ENCODE measurements at regions of chr14 and their contacts with region 1.

Region 1: DNA sequence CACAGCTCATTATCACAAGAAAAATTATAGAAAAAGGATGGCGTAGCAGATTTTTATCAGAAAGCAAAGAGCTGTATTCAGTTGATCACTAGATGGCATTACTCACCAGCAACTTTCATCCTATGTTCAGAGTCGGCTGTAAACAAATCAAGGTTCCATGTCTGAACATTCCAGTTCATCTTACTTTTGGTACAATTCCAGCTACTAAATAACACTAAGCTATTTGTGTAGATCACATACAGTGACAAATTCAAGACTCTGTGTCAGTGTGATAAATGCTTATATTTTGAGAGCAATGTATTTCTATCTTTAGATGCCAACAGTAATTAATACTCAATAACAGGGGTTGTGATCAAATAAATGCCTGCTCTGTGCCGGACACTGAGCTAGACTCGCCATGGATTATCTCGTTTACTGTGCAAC is 30.1 kb downstream of the NRDE2 start:
- DNase-seq: no peak
- ATAC-seq: peak; percentile 73
- H3K4me3 ChIP-seq: no peak overlapping the region
- H3K27ac ChIP-seq: peak overlapping the region; percentile 30
- H3K4me1 ChIP-seq: peaks cover 5% of the 10 kb centered on the region
- H3K27me3 ChIP-seq: no peaks in the 10 kb centered on the region

Region 2: DNA sequence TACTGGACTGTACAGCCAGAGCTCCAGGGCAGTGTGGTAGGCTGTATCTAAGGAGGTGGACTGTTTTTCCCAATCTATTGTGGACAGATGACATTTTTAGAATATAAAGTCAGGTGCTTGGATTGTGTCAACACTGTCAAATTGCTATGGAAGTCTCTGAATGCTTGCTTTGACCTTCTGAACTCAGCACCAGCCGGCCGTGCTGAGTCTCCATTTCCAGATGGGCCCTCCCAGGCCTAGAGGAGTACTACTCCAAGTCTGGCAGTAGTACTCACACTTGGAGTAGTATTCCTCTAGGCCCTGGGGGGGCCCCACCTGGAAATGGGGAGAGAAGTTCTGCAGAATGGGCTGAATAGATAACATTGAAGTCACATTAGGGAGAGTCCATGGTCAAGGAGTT is 256.1 kb before region 1 on chr14:
- intact Hi-C with region 1: no loop called
- DNase-seq: no peak
- ATAC-seq: no peak
- H3K4me3 ChIP-seq: no peak overlapping the region
- H3K27ac ChIP-seq: no peak overlapping the region
- H3K4me1 ChIP-seq: no peaks in the 10 kb centered on the region
- H3K27me3 ChIP-seq: no peaks in the 10 kb centered on the region

Region 3: DNA sequence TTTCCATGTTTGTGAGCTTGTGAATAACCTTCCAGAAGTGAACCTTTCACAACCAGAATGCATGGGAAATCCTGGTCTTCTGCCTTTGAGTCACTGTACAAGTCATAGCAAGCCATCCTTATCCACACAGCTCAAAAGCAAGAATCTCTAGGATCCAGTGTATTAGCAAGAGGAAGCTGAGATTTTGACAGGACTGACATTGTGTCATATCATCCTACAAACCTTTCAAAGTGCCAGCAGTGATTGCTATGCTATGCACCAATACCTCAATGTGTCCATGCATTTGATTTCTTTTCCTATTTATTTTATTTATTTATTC is 43.5 kb after region 1 on chr14:
- intact Hi-C with region 1: no loop called
- DNase-seq: no peak
- ATAC-seq: no peak
- H3K4me3 ChIP-seq: no peak overlapping the region
- H3K27ac ChIP-seq: no peak overlapping the region
- H3K4me1 ChIP-seq: no peaks in the 10 kb centered on the region
- H3K27me3 ChIP-seq: no peaks in the 10 kb centered on the region

Region 4: GRCh38 chr14:90383075-90383730 is 81.5 kb after region 1 on chr14:
- intact Hi-C with region 1: loop called in 1 of 4 experiments (anchors 5 kb)
- DNase-seq: peak; percentile 100
- ATAC-seq: peak; percentile 97 to 98
- H3K4me3 ChIP-seq: peak overlapping the region; percentile 65
- H3K27ac ChIP-seq: peak overlapping the region; percentile 99
- H3K4me1 ChIP-seq: no peaks in the 10 kb centered on the region
- H3K27me3 ChIP-seq: no peaks in the 10 kb centered on the region

Region 5: DNA sequence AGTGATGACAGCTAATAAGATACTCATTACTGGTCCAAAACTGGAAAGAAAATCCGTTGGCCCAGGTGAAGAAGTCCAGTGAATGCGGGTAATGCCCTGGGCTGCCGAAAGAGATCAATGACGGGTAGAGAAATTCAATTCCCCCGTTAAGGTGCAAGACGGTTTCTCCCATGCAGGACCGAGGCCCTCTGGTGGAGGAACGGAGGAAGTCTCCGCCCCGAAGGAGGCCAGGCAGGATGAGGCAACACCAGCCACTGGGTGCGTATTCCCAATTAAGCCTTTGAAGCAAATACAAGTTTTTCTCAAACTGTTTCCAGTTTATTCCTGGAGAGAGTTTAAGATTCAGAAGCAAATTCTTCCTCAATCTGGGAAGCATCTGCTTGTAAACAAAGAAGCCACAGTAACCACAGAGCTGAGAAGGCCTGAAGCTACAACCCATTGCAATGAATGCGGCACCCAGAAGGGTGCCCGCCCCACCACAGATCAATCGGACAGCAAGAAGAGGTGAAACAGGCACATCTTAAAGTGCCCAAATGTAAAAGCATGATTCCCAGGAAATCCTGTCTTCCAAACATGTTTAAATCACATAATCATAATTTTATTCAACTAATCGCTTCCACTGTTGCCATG is 396.0 kb after region 1 on chr14:
- intact Hi-C with region 1: loop called in 1 of 4 experiments (anchors 5 kb)
- DNase-seq: peak; percentile 84 to 92 (median 92)
- ATAC-seq: peak; percentile 92 to 94
- H3K4me3 ChIP-seq: no peak overlapping the region
- H3K27ac ChIP-seq: peak overlapping the region; percentile 13
- H3K4me1 ChIP-seq: peaks cover 4% of the 10 kb centered on the region
- H3K27me3 ChIP-seq: no peaks in the 10 kb centered on the region